Sigmoid colon (tissue), 7 donors: ENCODE measurements at regions of chr16 and their contacts with region 1.

Region 1: GRCh38 chr16:15440852-15441251 is 6.5 kb downstream of the BMERB1 start:
- DNase-seq: no peak
- H3K4me3 ChIP-seq: no peak overlapping the region
- H3K27ac ChIP-seq: peak overlapping the region in 2 of 4 donors; percentile 44 to 55
- H3K4me1 ChIP-seq: peaks cover 0 to 34% (median 16%) of the 10 kb centered on the region in 4 donors
- H3K27me3 ChIP-seq: no peaks in the 10 kb centered on the region
- CTCF ChIP-seq: no peak
- EP300 ChIP-seq: no peak
- POLR2A ChIP-seq: no peak

Region 2: GRCh38 chr16:15592324-15592723 is 151.5 kb after region 1 on chr16:
- intact Hi-C with region 1: loop called (anchors 5 kb)
- DNase-seq: no peak
- H3K4me3 ChIP-seq: no peak overlapping the region
- H3K27ac ChIP-seq: peak overlapping the region in 2 of 4 donors; percentile 1 to 14
- H3K4me1 ChIP-seq: peaks cover 0 to 6% (median 4%) of the 10 kb centered on the region in 4 donors
- H3K27me3 ChIP-seq: no peaks in the 10 kb centered on the region
- CTCF ChIP-seq: no peak
- EP300 ChIP-seq: no peak
- POLR2A ChIP-seq: no peak